Left colon (tissue), 2 donors: ENCODE measurements at regions of chr12 and their contacts with region 1.

Region 1: GRCh38 chr12:546921-547845 is 87.4 kb downstream of the B4GALNT3 start:
- DNase-seq: peak; percentile 48 to 70
- ATAC-seq: peak; percentile 83

Region 2: DNA sequence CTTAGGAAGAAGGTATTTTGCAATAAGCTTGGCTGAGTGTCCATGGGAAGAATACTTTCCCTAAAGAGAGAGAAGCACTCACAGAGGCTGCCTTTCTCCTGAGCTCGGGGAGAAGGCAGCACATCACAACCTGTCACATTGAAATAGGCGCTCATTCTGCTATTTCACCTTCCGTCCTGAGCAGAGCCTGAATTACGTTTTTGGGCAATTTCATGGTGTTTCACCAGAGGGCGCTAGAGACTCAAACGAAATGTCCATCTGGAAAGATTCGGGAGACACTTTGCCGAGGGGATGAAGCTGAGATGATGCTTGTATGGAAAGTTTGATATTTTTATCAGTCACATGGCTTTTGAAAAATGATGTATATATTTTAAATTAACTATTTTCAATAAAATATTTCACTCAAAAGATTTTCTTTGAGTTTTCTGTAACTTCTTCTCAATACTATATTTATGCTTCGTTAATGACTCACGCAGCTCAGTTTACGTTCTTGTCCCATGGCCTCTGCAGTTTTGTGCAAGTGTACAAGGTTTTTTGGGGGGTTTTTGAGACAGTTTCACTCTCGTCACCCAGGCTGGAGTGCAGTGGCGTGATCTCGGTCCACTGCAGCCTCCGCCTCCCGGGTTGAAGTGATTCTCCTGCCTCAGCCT is 104.8 kb before region 1 on chr12:
- intact Hi-C with region 1: loop called (anchors 5 kb)
- DNase-seq: peak in 1 of 2 donors; percentile 47
- ATAC-seq: peak; percentile 62

Region 3: DNA sequence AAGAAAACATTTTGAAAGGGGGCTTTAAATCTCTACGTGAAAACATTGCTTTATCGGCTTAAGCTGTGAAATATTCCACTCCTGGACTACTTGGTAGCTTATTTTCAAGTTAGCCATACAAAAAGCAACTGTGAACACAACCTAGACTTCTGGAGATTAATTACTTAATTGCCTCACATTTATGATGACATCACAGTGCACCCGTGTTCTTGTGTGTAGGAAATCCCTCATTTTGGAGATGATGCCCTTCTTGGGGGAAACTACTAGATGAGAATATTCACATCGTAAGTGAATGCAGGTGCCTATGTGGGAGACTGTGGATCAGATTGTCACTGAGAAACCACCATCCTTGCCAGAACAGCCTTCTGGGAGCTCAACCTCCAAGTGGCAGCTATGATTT is 98.0 kb before region 1 on chr12:
- intact Hi-C with region 1: loop called (anchors 5 kb)
- DNase-seq: no peak
- ATAC-seq: no peak